MCF 10A (cell line): ENCODE measurements at regions of chr18 and their contacts with region 1.

Region 1: DNA sequence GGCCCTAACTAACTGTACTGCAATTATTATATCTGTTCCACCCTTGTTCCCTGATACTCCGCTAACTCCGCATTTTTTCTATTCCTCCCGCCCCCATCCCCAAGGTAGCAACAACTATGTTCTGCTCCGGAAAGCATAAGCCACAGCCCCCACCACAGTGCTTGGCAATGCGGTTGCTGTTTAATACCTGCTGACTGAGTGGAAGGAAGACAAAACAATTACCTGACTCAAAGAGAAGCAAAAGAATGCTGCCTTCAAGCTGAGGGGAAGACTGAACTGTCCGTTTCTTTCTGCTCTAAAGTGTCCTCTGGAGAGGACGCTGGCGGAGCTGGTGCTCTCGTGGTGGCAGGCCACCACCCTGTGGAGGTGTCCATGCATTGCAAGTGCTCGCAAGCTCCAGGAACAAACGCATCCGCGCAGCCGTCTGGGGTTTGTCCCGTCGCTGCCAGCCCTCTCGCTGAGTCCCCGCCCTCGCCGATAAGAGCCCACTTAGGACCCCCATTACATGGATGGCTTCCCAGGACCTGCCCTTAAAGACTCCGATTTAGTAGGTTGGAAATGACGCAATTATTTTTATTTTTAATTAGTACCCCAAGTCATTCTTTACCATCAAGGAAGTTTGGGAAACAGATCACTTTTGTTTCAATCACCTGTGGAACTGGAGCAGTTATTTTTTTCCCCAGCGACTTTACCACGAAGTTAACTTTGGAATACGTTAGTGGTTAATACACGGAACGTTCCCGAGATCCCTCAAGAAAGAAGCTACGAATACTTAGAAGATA is 1.6 kb upstream of the MYL12A start:
- DNase-seq: peak; percentile 89
- H3K4me3 Mint-ChIP-seq: peak overlapping the region; percentile 86
- H3K27ac Mint-ChIP-seq: peak overlapping the region; percentile 100
- H3K4me1 Mint-ChIP-seq: peaks cover 22% of the 10 kb centered on the region
- H3K27me3 Mint-ChIP-seq: no peaks in the 10 kb centered on the region
- CTCF ChIP-seq: peak; percentile 97

Region 2: DNA sequence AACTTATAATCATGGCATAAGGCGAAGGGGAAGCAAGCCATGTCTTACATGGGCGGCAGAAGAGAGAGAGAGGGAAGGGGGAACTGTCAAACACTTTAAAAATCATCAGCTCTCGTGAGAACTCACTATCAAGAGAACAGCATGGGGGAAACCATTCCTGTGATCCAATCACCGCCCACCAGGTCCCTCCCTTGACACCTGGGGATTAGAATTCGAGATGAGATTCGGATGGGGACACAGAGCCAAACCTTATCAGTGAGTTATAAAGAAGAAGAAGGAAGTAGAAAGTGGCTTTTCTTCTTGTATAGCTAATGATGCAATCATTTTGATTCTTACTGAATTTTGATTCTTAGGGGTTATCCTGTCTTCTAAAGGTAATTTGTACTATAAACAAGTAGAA is 539.1 kb before region 1 on chr18:
- CTCF ChIA-PET with region 1: no interaction called
- POLR2A ChIA-PET with region 1: no interaction called
- intact Hi-C with region 1: no loop called
- DNase-seq: no peak
- H3K4me3 Mint-ChIP-seq: no peak overlapping the region
- H3K27ac Mint-ChIP-seq: peak overlapping the region; percentile 78
- H3K4me1 Mint-ChIP-seq: peaks cover 5% of the 10 kb centered on the region
- H3K27me3 Mint-ChIP-seq: no peaks in the 10 kb centered on the region
- CTCF ChIP-seq: no peak

Region 3: DNA sequence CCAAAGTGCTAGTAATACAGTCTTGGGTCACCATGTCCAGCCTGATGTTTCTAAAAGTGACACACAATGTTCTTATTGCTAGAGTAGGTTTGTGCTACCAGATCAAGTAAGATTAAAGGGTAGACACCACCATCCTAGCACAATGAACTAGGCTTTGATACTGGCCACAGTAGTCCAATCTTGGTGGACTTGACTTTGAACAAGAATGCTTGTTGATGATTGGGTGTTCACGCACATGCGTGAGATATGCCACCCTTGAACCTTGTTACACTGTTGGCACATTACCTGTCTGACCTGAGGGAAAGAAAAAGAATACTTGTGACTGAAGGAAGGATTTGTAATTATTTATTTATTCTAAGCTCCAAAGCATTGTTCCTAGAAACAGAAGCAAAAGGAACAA is 471.4 kb before region 1 on chr18:
- CTCF ChIA-PET with region 1: no interaction called
- POLR2A ChIA-PET with region 1: interaction called, 7 read pairs
- intact Hi-C with region 1: loop called (anchors 5 kb)
- DNase-seq: no peak
- H3K4me3 Mint-ChIP-seq: no peak overlapping the region
- H3K27ac Mint-ChIP-seq: no peak overlapping the region
- H3K4me1 Mint-ChIP-seq: no peaks in the 10 kb centered on the region
- H3K27me3 Mint-ChIP-seq: no peaks in the 10 kb centered on the region
- CTCF ChIP-seq: no peak

Region 4: GRCh38 chr18:2978646-2979045 is 267.4 kb before region 1 on chr18:
- CTCF ChIA-PET with region 1: interaction called, 9 read pairs
- POLR2A ChIA-PET with region 1: interaction called, 19 read pairs
- intact Hi-C with region 1: no loop called
- DNase-seq: peak; percentile 80
- H3K4me3 Mint-ChIP-seq: peak overlapping the region; percentile 23
- H3K27ac Mint-ChIP-seq: peak overlapping the region; percentile 92
- H3K4me1 Mint-ChIP-seq: peaks cover 33% of the 10 kb centered on the region
- H3K27me3 Mint-ChIP-seq: no peaks in the 10 kb centered on the region
- CTCF ChIP-seq: no peak

Region 5: DNA sequence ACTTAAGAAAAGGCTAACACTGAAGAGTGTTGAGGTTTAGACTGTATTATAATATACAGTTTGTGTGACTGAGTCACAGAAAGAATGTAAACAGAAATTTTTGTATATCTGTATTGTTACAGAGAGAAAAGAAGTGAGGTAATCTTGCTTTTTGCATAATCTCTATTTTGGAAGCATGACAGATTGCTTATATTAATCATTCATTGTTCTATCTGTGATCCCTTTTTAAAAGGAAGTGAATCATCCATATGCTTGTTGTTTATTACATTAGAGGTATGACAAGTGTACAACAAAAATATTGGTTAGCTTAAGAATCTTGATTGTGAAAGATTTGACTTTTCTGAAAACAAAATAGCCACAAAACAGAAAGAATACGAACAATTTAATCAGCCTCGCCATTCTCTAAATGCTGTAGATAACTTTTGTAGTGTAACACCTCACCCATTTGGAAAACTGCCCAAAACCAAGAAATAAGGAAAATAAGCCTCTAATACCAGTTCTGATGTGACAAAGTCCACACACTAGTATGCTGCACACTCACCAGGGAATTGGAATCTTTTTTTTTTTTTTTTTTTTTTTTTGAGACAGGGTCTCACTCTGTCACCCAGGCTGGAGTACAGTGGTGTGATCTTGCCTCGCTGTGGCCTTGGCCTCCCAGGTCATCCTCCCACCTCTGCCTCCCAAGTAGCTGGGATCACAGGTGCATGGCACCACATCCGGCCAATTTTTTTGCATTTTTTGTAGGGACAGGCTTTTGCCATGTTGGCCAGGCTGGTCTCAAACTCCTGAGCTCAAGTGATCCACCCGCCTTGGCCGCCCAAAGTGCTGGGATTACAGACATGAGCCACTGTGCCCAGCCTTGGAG is 141.6 kb before region 1 on chr18:
- CTCF ChIA-PET with region 1: interaction called, 4 read pairs
- POLR2A ChIA-PET with region 1: interaction called, 10 read pairs
- intact Hi-C with region 1: no loop called
- DNase-seq: peak; percentile 80
- H3K4me3 Mint-ChIP-seq: peak overlapping the region; percentile 49
- H3K27ac Mint-ChIP-seq: peak overlapping the region; percentile 96
- H3K4me1 Mint-ChIP-seq: peaks cover 15% of the 10 kb centered on the region
- H3K27me3 Mint-ChIP-seq: no peaks in the 10 kb centered on the region
- CTCF ChIP-seq: no peak

Region 6: DNA sequence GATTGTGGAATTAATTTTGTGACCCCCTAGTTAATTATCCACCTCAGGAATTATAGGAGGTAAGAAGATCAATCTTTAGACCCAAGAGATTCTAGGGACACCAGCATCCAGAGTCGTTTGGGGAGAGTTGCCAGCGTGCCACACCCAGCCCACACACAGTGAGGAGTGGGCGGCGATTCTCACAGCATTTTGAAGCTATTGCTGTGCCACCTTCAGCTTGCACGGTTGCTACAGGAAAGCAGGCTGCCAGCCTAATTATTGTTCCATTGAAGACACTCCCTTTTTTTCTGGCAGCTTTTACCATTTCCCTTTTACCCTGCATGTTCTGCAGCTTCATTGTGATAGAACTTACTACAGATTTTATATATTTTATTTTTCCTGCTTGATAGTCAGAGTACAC is 11.6 kb before region 1 on chr18:
- CTCF ChIA-PET with region 1: interaction called, 11 read pairs
- POLR2A ChIA-PET with region 1: interaction called, 6 read pairs
- intact Hi-C with region 1: no loop called
- DNase-seq: no peak
- H3K4me3 Mint-ChIP-seq: no peak overlapping the region
- H3K27ac Mint-ChIP-seq: no peak overlapping the region
- H3K4me1 Mint-ChIP-seq: peaks cover 9% of the 10 kb centered on the region
- H3K27me3 Mint-ChIP-seq: no peaks in the 10 kb centered on the region
- CTCF ChIP-seq: no peak

Region 7: DNA sequence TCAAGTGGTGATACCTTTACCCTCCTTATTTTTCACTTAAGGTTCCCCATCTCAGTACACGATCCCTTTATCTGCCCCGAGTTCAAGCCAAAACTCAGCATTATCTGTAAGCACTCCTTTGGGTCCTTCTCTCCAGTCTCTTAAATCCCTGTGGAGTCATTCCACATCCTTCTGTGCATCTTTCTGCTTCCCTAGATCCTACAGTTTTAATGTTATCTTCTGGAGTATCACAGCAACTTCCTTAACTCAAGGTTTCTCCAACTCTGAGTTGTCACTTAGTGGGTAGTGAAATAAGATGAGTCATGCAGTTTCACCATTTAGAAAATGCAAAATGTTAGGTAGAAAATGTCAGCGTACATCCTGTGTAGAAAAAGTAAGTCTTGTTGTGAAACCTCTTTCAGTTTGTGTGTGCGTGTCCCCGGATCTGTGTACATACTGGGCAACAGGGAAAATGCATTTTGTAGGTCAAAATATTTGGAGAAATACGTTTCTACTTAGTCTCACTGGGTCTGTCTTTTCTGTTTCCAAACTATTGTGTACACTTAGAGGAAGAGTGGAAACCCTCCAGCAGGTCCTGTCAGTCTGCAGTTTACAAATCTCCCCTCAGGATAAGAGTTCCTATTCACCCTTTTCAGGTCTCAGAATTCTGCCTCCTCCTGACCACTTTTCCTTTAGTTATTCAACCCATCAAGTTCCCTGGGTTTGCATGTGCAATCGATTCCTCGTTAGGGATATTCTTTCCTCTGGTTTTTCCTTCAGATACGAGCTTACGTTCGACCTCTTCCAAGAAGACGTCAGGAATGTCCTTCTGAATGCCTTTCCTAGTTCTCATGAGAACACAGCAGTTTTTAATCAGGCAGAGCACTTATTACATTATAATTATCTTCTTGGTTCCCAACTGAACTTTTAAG is 358.7 kb after region 1 on chr18:
- CTCF ChIA-PET with region 1: interaction called, 3 read pairs
- POLR2A ChIA-PET with region 1: interaction called, 21 read pairs
- intact Hi-C with region 1: no loop called
- DNase-seq: peak; percentile 91
- H3K4me3 Mint-ChIP-seq: no peak overlapping the region
- H3K27ac Mint-ChIP-seq: no peak overlapping the region
- H3K4me1 Mint-ChIP-seq: no peaks in the 10 kb centered on the region
- H3K27me3 Mint-ChIP-seq: no peaks in the 10 kb centered on the region
- CTCF ChIP-seq: no peak